GM13976 (cell line): ENCODE measurements at regions of chr19 and their contacts with region 1.

Region 1: DNA sequence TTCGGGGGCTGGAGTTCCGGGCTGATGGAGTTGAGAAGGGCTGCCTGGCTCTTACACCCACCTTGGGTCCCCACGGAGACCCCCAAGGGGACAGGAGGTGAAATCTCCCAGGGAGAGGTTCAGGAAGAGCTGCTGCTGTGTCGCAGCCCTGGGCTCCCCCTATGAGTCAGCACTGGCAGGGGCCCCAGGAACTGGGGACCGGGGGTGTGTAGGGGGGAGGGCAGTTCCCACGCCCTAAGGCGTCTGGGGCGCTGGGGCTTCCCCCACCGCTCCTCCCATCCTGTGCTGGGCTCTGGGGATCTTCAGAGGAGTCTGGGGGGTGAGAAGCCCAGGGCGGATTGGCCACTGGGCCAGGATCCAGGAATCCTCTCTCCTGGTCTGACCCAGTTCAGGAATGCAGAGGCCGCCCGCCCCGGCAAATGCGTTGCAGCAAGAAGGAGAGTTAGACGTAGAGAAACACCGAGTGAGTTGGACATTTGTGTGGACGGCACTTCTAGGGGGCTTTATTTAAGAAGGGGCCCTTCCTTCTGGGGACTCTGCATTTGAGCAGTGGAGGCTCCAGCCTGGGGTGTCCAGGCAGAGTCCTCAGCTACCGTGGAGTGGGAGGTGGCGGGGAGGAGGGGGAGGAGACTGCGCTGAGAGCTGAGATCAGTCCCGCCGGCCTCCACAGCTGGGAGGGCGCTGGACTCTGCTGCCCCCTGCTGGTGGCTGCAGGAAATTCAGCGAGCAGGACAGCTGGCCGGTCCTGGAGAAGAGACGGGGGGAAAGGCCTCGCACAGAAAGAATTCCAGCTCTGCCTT is 15.0 kb upstream of the NANOS3 start:
- DNase-seq: peak; percentile 94
- CTCF ChIP-seq: peak; percentile 96

Region 2: DNA sequence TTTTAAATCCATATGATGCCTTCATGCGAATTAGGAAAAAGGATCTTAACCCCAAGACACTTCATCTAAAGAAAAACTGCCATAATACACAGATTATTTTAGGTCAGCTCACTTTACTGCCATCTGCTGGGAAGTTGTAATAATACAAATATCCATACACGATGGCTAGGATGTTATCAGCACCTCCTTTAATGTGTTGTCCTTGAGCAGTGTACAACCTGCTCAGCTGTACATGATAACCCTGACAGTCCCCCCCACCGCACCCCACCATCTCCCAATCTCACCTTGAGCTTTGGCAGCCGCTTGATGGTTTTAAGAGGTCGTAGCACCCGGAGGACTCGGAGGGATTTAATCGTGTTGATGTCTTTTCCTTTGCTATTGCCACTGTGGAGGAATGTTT is 599.5 kb before region 1 on chr19:
- in situ Hi-C with region 1: loop called (anchors 25 kb)
- DNase-seq: peak; percentile 70
- CTCF ChIP-seq: peak; percentile 32

Region 3: DNA sequence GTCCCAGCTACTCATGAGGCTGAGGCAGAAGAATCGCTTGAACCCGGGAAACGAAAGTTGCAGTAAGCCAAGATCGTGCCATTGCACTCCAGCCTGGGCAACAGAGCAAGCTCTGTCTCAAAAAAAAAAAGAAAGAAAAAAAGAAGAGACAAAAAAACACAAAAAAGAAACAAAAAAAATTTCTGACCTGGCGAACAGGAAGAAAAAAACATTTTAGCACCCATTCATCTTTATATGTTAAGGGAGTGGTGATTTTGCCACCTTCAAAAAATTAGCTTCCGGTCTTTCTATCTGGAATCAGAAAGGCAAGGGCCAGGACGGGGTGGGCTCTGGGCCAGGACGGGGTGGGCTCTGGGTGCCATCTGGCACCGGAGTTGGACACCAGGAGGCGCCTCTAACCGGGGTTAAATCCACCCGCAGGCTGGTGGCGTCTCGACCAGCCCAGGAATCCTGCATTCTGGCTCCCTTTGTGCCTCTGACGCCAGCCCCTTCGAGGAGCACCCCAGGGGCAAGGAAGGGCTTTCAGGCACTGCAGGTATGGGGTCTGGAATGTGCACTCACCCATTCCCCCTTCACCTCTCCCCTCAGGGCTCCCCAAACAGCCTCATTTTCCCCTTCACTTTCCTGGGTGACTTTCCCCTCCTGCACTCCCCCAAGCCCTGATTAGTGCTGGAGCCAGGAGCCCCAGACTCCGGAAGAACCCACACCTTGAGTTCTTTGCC is 77.0 kb before region 1 on chr19:
- in situ Hi-C with region 1: loop called (anchors 5 kb)
- DNase-seq: peak; percentile 75
- CTCF ChIP-seq: peak; percentile 57